Caco-2 (cell line): ENCODE measurements at regions of chr3 and their contacts with region 1.

Region 1: DNA sequence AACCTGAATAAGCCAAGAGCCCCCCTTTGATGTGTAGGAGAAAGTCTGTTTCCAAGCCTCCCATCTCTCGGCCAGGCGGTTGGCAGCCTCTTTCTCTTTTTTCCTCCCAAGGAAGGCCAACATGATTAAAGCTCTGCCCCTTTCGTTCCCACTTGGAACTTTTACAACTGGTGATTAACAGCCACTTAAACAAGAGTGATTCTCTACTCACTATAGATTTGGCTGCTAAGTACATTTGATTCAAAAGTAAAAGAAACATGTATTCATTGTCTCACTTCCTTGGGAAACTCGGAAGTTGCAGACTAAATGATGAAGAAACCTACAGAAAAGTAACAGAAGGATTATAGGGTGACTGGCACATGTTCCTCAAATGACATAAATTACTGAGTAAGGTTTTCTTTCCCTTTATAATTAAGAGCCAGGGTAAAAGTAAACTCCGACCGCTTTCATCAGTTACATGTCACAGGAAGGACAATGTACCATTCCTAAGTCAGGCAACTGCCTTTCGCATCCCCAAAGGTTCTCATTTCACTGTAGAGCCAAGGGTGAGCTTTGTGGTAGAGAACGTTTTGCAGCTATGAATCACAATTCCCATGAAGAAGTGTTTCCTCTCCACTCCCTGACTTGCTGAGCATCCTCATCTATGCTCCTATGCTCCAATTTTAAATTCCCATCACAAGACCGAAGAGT is 72.7 kb downstream of the MB21D2 start:
- DNase-seq: no peak
- H3K4me3 ChIP-seq: no peak overlapping the region
- H3K4me3 Mint-ChIP-seq: no peak overlapping the region
- H3K27ac Mint-ChIP-seq: no peak overlapping the region
- H3K4me1 ChIP-seq: peaks cover 30% of the 10 kb centered on the region
- H3K4me1 Mint-ChIP-seq: peaks cover 8% of the 10 kb centered on the region
- H3K27me3 ChIP-seq: no peaks in the 10 kb centered on the region
- H3K27me3 Mint-ChIP-seq: no peaks in the 10 kb centered on the region
- CTCF ChIP-seq: no peak

Region 2: GRCh38 chr3:192879336-192880106 is 34.5 kb after region 1 on chr3:
- CTCF ChIA-PET with region 1: no interaction called
- POLR2A ChIA-PET with region 1: no interaction called
- intact Hi-C with region 1: loop called (anchors 1 kb)
- DNase-seq: peak; percentile 82 to 87
- H3K4me3 ChIP-seq: no peak overlapping the region
- H3K4me3 Mint-ChIP-seq: peak overlapping the region; percentile 66
- H3K27ac Mint-ChIP-seq: no peak overlapping the region
- H3K4me1 ChIP-seq: peaks cover 38% of the 10 kb centered on the region
- H3K4me1 Mint-ChIP-seq: peaks cover 43% of the 10 kb centered on the region
- H3K27me3 ChIP-seq: no peaks in the 10 kb centered on the region
- H3K27me3 Mint-ChIP-seq: no peaks in the 10 kb centered on the region
- CTCF ChIP-seq: no peak

Region 3: DNA sequence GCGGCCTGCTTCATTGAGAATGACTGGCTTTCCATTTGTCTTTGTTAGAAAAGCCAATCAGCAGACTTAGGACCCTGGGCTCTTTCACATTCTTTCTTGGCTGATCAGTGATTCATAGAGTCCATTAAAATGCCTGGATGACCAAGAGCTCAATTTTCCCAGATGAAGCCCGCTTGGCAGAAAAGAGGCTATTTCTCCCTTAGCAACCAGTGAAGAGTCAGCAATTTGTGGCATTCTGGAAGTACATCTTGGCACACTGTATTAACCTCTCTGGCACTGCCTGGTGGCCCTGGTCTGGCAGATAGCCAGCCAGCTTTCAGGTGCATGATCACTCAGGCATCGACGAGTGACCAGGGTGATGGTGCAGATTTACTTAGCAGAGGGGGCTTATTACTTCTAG is 250.4 kb after region 1 on chr3:
- CTCF ChIA-PET with region 1: no interaction called
- POLR2A ChIA-PET with region 1: no interaction called
- intact Hi-C with region 1: no loop called
- DNase-seq: no peak
- H3K4me3 ChIP-seq: no peak overlapping the region
- H3K4me3 Mint-ChIP-seq: no peak overlapping the region
- H3K27ac Mint-ChIP-seq: no peak overlapping the region
- H3K4me1 ChIP-seq: no peaks in the 10 kb centered on the region
- H3K4me1 Mint-ChIP-seq: no peaks in the 10 kb centered on the region
- H3K27me3 ChIP-seq: no peaks in the 10 kb centered on the region; the same call in none of the 2 replicates
- H3K27me3 Mint-ChIP-seq: peaks cover 28% of the 10 kb centered on the region
- CTCF ChIP-seq: no peak